Right ventricle myocardium inferior (tissue), 1 donor: ENCODE measurements at regions of chr10 and their contacts with region 1.

Region 1: GRCh38 chr10:62109587-62110293 is 158.9 kb downstream of the RTKN2 start:
- DNase-seq: no peak
- ATAC-seq: peak; percentile 42

Region 2: DNA sequence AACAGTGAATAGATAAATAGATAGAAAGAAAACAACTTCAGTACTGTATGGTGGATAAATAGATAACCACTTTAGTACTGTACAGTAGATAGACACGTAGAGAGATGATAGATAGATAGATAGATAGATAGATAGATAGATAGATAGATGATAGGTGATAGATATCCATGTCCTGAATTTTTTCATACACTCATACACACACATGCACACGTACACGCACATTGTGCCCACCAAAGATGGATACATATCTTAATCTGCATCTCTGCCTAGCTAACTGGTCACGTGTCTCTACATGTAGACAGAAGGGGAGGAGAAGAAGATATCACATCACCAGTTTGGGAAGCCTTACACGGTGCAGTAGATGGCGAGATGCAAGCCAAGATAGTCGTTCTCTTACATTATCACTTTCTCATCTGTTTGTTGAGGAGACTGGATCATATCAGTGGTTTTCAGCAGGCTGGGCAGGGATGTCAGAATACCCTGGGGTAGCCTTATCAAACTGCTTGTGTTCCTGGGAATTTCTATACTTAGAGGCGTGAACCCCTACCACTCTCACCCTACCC is 108.9 kb before region 1 on chr10:
- intact Hi-C with region 1: no loop called
- DNase-seq: no peak
- ATAC-seq: no peak

Region 3: DNA sequence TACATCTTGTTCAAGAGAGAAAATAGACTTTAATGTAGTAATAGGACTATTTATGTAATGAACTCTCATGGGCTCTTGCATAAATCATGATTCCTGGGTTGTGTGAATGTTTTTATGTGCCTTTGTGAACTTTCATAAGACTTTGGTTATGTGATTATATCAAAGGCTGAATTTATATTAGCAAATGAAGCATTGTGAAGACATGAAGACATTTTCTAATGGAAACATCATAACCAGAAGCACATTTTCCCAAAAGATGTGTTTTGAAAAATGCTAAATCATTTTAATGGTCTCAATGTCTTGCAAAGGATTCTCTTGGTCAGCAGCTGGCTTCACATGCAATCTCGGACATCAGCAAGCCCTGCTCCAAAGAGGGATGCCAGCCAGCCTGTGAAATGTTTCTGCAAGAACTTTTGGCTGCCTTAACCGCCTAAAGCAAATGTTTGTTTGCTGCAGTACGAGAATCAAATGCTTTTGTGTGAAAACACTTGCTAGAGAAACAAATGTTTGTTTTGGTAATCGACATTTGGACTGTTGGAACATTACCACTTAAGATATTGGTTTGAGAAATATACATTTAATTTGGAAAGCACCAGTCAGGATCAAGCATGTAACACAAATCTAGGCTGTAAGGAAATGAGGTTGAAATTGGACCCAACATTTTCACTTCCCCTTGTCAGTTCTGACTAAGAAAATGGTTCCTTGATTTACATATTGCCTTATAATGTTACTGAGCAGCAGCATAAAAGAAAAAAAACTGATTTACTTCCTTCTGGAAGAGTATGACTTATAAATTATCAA is 56.8 kb after region 1 on chr10:
- intact Hi-C with region 1: loop called (anchors 10 kb)
- DNase-seq: peak; percentile 71
- ATAC-seq: peak; percentile 44